ENCODE measurements at regions of chr21 and their contacts with region 1.

Region 1: GRCh38 chr21:18424276-18424675 is 20.7 kb upstream of the TMPRSS15 start:
- DNase-seq: no peak
- H3K4me3 Mint-ChIP-seq: no peak overlapping the region
- H3K27ac Mint-ChIP-seq: no peak overlapping the region
- H3K4me1 Mint-ChIP-seq: no peaks in the 10 kb centered on the region
- H3K27me3 Mint-ChIP-seq: no peaks in the 10 kb centered on the region

Region 2: GRCh38 chr21:18155508-18156193 is 268.6 kb before region 1 on chr21:
- CTCF ChIA-PET with region 1: no interaction called
- POLR2A ChIA-PET with region 1: interaction called, 11 read pairs
- DNase-seq: no peak
- H3K4me3 Mint-ChIP-seq: no peak overlapping the region
- H3K27ac Mint-ChIP-seq: peak overlapping the region; percentile 54
- H3K4me1 Mint-ChIP-seq: peaks cover 25% of the 10 kb centered on the region
- H3K27me3 Mint-ChIP-seq: no peaks in the 10 kb centered on the region